Right ventricle myocardium inferior (tissue), 1 donor: ENCODE measurements at regions of chr7 and their contacts with region 1.

Region 1: DNA sequence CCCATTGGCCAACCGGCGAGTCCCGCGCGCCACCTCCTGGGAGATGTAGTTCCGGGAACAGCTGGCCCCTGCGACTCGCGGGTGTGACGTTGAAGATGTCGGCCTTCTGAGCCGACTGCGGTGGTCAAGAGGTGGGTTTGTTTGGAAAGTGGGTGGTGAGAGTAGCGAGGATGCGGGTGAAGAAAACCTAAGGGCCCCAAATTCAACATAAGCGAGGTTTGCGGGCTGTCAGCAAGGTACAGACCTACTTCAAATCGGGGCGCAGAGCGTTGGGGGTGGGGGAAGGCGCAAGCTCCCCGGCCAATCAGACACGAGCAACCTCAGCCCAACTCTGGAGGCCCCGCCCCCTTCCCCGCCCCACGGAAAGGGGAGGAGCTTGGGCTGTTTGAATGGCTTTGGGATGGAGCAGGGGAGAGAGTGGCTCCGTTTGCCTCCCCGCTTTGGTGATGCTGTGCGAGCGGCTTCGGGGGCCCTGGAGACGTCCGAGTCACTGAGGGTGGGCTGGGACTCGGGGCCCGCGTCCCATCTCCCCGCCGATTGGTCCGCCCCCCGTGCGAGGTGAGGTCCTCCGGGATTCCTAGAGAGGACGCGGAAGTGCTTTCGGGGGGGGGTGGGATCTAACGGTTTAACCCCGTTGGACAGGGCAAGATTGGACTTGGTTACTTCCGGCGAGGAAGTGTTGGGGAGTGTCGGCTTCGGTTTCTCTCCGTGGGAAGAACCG is at the start of gene ZKSCAN5:
- DNase-seq: peak; percentile 99
- ATAC-seq: peak; percentile 96
- total RNA-seq, gene ZKSCAN5: 6.7 TPM

Region 2: GRCh38 chr7:99438573-99439480 is 65.9 kb before region 1 on chr7 and contains the starts of genes CPSF4 and PTCD1:
- intact Hi-C with region 1: loop called (anchors 2 kb)
- DNase-seq: peak; percentile 97
- ATAC-seq: peak; percentile 98
- total RNA-seq, gene CPSF4: 18.9 TPM
- total RNA-seq, gene PTCD1: 3.6 TPM

Region 3: DNA sequence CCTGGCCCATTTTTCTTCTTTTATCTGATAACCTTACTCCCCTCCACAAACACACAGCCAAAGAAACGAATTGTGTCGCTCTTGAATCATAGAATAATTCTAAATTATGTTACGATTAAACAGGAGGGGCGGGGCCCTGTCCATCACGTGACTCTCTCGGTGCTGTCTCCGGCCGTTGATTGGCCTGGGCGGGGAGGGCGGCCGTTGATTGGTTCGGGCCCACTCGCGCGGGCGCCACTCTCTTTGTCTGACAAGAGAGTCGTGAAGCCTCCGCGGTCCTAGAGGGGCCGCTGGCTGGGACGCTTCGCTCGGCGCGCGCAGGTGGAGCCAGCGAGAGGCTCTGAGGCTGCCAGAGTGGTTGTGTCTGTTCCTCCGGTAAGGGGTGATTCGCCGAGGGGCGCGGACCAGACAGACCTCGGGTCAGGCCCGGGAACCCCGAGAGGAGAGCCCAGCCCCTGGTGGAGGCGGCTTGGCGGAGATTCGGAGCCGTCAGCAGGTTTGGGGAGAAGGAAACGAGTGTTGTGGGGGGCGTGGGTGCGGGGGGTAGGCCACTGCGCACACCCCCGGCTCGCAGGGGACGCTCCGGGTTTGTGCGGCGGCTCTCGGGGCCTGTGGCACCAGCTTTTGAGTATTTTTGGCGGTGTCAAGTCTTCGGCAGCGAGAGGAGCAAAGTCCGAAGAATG is 32.1 kb before region 1 on chr7 and contains the start of gene ZNF789:
- intact Hi-C with region 1: loop called (anchors 2 kb)
- DNase-seq: peak; percentile 100
- ATAC-seq: peak; percentile 99
- total RNA-seq, gene ZNF789: 2.9 TPM

Region 4: DNA sequence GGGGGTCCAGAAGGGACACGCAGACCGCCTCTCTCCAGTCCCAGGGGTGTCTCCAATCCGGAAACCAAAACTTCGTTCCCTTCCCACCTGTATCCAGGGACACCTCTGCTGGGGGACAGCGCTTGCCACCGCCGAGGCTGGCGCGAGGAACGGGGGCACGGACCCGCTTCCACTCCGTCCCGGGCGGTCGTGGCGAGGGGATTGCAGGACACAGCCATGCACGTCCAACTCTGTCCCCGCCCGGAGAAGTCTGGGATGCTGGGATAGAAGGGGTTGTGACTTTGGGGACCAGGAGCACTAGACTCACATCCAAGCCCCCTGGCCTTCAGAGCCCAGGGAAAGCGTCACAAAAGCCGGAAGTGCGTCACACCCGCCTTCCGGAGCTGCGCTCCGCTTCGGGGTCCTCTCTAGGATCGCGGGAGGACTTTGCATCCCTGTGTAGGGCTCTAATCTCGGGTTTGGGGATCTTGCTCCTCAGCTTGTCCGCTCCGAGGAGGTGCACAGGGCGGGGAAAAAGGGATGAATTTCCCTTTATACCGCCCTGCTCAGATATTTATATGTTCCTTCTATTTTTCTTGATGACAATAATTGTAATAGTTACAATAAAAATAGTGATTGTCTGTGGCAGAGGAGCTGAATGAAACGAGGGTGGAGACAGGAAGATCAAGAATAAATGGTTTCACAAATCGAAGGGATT is 47.2 kb after region 1 on chr7 and contains the start of gene FAM200A:
- intact Hi-C with region 1: loop called (anchors 5 kb)
- DNase-seq: peak; percentile 94
- ATAC-seq: peak; percentile 98
- total RNA-seq, gene FAM200A: 6.8 TPM

Region 5: GRCh38 chr7:99918959-99919813 is 414.4 kb after region 1 on chr7 and contains the start of gene TRIM4:
- intact Hi-C with region 1: no loop called
- DNase-seq: peak; percentile 96
- ATAC-seq: peak; percentile 100
- total RNA-seq, gene TRIM4: 6.2 TPM